ENCODE measurements at regions of chr12 and their contacts with region 1.

Region 1: GRCh38 chr12:5442251-5443006 is 10.5 kb downstream of the NTF3 start:
- DNase-seq: no peak
- ATAC-seq: peak; percentile 71
- H3K4me3 ChIP-seq: no peak overlapping the region
- H3K27ac ChIP-seq: no peak overlapping the region
- H3K4me1 ChIP-seq: peaks cover under 1 to 8% of the 10 kb centered on the region in 2 donors
- H3K27me3 ChIP-seq: no peaks in the 10 kb centered on the region

Region 2: GRCh38 chr12:5096241-5096935 is 346.0 kb before region 1 on chr12:
- intact Hi-C with region 1: loop called in 1 of 2 experiments (anchors 5 kb)
- DNase-seq: no peak
- ATAC-seq: no peak
- H3K4me3 ChIP-seq: no peak overlapping the region
- H3K27ac ChIP-seq: no peak overlapping the region
- H3K4me1 ChIP-seq: no peaks in the 10 kb centered on the region
- H3K27me3 ChIP-seq: no peaks in the 10 kb centered on the region

Region 3: GRCh38 chr12:5473076-5473782 is 30.8 kb after region 1 on chr12:
- intact Hi-C with region 1: loop called in 1 of 2 experiments (anchors 5 kb)
- DNase-seq: no peak
- ATAC-seq: no peak
- H3K4me3 ChIP-seq: no peak overlapping the region
- H3K27ac ChIP-seq: no peak overlapping the region
- H3K4me1 ChIP-seq: peaks cover 5% of the 10 kb centered on the region in 2 donors
- H3K27me3 ChIP-seq: no peaks in the 10 kb centered on the region

Region 4: DNA sequence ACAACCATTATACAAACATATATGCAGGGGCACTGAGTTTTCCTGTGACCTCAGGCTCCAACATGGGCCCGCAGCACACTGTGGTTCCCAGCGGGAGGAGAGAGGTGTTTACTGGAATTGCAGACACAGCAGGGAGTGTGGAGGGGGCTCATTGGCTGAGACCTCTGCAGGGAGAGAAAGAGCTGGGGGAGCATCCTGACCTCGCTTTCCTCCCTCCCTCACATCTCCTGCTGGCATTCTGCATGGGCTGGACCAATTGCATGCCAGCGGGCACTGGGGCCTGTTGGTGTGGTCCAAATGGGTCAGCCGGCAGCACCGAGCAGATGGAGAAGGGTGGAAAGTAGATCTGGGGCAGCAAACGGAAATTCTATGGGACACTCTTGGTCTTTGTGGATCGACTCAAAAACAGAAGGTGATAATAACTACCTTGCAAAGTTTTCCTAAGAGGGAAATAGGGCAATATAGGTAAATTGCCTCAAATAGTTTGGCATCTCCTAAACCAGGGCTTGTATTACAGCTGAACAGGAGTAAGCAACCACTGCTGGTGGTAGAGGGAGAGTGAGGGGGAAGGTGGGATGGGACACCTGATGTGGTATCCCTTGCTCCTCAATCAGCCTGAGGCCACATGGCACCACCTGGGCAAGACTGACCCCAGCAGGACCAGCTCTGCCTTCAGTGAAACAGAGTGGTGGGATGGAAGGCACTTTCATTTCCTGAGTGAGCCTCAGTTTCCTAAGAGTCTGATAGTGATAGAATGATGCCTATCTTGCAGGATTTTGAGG is 76.3 kb after region 1 on chr12:
- intact Hi-C with region 1: no loop called
- DNase-seq: no peak
- ATAC-seq: no peak
- H3K4me3 ChIP-seq: no peak overlapping the region
- H3K27ac ChIP-seq: no peak overlapping the region
- H3K4me1 ChIP-seq: no peaks in the 10 kb centered on the region
- H3K27me3 ChIP-seq: no peaks in the 10 kb centered on the region

Region 5: GRCh38 chr12:5581019-5581418 is 138.6 kb after region 1 on chr12:
- intact Hi-C with region 1: no loop called
- DNase-seq: no peak
- ATAC-seq: peak; percentile 25
- H3K4me3 ChIP-seq: no peak overlapping the region
- H3K27ac ChIP-seq: no peak overlapping the region
- H3K4me1 ChIP-seq: no peaks in the 10 kb centered on the region
- H3K27me3 ChIP-seq: no peaks in the 10 kb centered on the region